ENCODE measurements at regions of chr5 and their contacts with region 1.

Region 1: DNA sequence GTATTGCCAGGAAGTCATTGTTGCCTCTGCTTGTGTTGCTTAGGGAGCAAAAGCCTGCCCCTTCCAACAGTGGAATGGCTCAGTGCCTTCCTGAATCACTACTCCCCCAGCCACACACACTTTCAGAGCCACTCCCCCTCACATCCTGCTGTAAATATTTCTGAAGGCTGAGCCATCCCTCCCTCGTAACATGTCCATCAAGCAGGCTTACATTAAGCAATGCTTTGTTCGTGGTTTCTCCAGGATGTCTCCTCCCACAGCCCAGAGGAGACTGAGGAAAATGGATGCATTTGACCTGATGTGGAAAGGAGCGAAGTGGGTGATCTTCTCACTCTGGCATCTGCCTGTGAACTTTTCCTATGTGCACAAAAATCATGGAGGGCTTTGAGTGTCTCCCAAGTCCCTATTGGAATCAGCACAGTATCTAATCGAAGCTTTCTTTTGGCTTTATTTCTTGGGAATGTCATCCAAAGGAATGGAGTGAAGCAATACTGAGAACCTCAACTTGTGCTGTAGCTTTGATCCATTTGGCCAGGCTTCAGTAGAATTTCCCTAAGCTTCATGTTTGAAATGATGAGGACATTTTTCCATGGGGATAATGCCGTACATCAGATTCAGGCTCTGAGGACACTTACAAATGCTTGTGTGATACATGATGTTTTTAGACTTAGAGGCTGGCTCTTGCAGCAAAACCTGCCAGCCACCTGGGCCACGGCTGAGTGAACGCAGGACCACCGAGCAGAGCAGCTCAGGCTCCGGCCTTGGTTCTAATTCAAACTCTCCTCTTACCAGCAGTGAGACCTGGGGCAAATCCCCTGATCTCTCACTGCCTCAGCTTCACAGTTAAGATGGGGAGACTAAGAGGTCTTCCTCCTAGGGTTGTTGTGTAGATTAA is 389.1 kb downstream of the ENC1 start:
- DNase-seq: peak; percentile 27
- H3K4me3 ChIP-seq: no peak overlapping the region
- H3K27ac ChIP-seq: peak overlapping the region; percentile 28 to 61 (median 48)
- H3K4me1 ChIP-seq: peaks cover 0 to 16% (median 6%) of the 10 kb centered on the region in 4 donors
- H3K27me3 ChIP-seq: no peaks in the 10 kb centered on the region
- CTCF ChIP-seq: no peak
- EP300 ChIP-seq: no peak
- POLR2A ChIP-seq: no peak

Region 2: GRCh38 chr5:74281166-74281565 is 29.8 kb after region 1 on chr5:
- in situ Hi-C with region 1: no loop called
- intact Hi-C with region 1: loop called (anchors 2 kb)
- DNase-seq: no peak
- H3K4me3 ChIP-seq: no peak overlapping the region
- H3K27ac ChIP-seq: no peak overlapping the region
- H3K4me1 ChIP-seq: no peaks in the 10 kb centered on the region
- H3K27me3 ChIP-seq: no peaks in the 10 kb centered on the region
- CTCF ChIP-seq: no peak
- EP300 ChIP-seq: no peak
- POLR2A ChIP-seq: no peak

Region 3: DNA sequence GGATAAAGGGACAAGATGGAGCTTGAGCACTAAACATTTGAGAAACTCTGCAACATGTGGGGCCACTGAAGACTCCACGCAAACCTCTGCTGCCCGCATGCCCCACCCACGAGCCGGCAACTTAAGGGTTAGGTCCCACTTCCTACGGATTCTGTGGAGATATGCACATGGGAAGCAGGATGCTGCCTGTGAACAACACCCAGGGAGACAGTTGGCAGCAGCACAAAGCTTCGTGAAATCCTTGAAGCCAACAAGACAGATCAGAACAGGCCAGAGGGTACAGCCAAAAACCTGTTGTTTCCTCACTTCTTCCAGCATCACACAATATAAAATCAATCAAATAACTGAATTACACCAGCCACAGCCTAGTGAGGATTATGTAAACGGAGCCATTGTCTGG is 118.8 kb after region 1 on chr5:
- in situ Hi-C with region 1: no loop called
- intact Hi-C with region 1: no loop called
- DNase-seq: no peak
- H3K4me3 ChIP-seq: no peak overlapping the region
- H3K27ac ChIP-seq: no peak overlapping the region
- H3K4me1 ChIP-seq: peaks cover 0 to 6% (median 0%) of the 10 kb centered on the region in 4 donors
- H3K27me3 ChIP-seq: no peaks in the 10 kb centered on the region
- CTCF ChIP-seq: no peak
- EP300 ChIP-seq: no peak
- POLR2A ChIP-seq: no peak

Measured in transverse colon (tissue), 4 donors.